ENCODE measurements at regions of chrX and their contacts with region 1.

Region 1: DNA sequence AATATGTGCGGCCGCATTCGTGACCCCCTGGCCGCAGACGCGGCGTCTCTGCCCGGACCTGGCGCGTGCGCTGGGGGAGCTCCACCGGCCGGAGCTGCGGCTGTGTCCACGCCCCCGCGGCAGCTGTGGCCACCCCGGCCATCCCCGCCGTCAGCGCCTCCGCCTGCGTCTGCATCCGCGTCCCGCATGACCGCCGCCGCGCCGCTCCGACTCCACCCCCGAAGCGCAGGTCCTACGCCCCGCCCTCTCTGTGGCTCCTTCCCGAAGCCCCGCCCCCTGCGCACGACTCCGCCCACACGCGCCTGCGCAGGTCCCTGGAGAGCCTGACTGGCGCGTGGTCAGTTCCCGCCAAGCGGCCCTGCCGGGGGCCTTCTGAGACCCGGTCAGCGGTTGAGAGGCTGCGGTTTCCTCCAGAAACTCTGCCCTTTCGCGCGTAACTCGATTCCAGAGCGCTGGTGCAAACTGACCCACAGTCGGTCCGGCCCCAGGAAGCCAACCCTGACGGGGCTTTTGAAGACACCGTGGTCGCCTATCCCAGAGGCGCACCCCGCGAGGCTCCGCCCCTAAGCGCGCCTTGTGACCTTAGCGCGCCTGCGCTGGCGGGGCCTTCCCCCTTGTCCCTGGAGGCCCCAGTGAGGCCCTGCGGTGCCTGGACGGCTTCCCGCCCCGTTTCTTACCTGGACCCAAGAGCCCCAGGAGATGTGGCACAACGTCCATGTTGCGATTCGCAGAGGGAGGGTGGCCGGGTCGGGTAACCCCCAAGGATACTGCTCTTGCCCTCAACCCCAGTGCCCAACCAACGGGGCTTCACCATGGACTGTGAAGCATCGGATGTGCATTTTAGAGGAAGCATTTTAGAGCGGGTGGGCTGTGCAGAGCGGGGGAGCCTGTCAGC is at the start of gene LAGE3:
- DNase-seq: peak; percentile 95
- ATAC-seq: peak; percentile 90
- H3K4me3 Mint-ChIP-seq: peak within 1 kb of the TSS; percentile 80
- H3K27ac Mint-ChIP-seq: peak within 1 kb of the TSS; percentile 88
- H3K4me1 Mint-ChIP-seq: peaks cover 23% of the 10 kb centered on the region
- H3K27me3 Mint-ChIP-seq: no peaks in the 10 kb centered on the region
- CTCF ChIP-seq: no peak
- total RNA-seq, gene LAGE3: 16.6 and 18.9 TPM in 2 replicates

Region 2: DNA sequence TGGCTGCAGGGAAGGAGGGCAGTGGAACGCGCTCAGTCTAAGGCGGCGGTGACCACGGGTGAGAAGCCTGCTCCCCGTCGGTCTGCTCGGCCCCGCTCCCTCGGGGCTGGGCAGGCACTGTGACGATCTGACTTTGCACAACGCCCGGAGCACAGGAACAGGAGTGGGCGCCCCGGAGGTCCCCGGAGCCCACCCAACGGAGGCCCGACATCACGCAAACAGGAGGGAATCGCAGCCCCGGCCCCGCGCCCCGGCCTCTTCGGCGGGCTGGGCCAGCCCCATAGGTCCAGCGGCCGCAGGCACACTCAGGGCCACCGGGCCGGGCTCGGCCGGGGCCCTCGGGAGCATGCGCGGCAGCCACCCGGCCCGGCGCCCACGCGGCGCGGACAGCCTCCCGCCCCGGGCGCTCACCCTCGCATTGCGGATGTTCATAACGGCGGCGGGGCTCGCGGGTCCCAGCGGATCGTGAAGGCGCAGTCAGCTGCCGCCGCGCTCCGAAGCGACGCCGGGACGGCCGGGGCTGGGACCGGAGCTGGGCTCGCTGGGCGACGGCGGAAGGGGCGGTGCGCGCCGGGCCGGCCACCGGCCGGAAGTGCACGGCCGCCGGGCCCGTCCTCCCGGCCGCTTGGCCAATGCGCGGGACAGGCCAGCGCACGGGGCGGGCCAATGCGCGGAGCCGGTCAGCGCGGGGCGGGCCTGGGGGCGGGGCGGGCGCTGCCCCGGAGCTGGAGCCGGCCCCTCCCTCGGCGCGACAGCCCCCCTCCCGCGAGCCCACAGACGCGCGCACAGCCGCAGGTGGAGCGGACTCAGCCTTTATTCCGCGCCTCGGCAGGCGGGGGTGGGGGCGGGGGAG is 544.3 kb before region 1 on chrX and contains the start of gene NAA10:
- CTCF ChIA-PET with region 1: no interaction called
- POLR2A ChIA-PET with region 1: no interaction called
- intact Hi-C with region 1: no loop called
- DNase-seq: peak; percentile 62
- ATAC-seq: peak; percentile 93
- H3K4me3 Mint-ChIP-seq: peak within 1 kb of the TSS; percentile 84
- H3K27ac Mint-ChIP-seq: peak within 1 kb of the TSS; percentile 46
- H3K4me1 Mint-ChIP-seq: peaks cover 24% of the 10 kb centered on the region
- H3K27me3 Mint-ChIP-seq: no peaks in the 10 kb centered on the region
- CTCF ChIP-seq: no peak
- total RNA-seq, gene NAA10: 94.8 and 109 TPM in 2 replicates

Region 3: DNA sequence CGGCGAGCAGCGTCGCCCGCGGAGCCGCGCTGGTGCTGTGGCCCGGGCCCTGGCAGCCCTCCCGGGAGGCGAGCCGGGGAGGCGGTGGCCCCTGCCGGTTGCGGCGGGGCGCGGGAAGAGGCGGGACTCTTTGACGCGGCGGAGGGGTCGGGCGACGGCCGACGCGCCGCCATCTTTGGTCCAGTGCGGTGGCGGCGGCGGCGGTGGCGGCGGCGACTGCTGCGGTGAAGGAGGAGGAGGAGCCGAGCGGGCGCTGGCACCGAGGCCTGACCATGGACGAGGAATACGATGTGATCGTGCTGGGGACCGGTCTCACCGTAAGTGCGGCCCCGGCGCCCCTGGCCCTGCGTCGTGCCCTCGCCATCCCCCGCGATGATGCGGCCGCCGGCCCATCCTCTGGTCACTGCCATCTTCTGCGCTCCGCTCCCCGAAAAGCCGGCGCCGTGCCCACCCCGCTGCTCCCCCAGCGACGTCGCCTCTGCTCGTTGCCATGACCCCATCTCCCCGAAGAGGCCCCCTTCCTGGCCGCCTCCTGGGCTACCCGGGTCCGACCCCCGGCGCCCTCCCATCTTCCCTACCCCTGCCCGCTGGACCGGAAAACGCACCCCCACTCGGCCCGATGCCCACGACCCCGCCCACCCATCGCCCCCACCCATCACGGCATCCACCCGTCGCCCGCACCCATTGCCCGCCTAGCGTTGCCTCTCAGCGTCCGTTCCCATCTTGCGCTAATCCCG is 41.8 kb before region 1 on chrX and contains the start of gene GDI1:
- CTCF ChIA-PET with region 1: no interaction called
- POLR2A ChIA-PET with region 1: interaction called, 4 read pairs
- intact Hi-C with region 1: loop called (anchors 2 kb)
- DNase-seq: peak; percentile 62
- ATAC-seq: peak; percentile 69
- H3K4me3 Mint-ChIP-seq: peak within 1 kb of the TSS; percentile 88
- H3K27ac Mint-ChIP-seq: peak within 1 kb of the TSS; percentile 86
- H3K4me1 Mint-ChIP-seq: peaks cover 22% of the 10 kb centered on the region
- H3K27me3 Mint-ChIP-seq: no peaks in the 10 kb centered on the region
- CTCF ChIP-seq: no peak
- total RNA-seq, gene GDI1: 112 and 127 TPM in 2 replicates

Region 4: GRCh38 chrX:154526901-154527675 is 48.1 kb after region 1 on chrX:
- CTCF ChIA-PET with region 1: no interaction called
- POLR2A ChIA-PET with region 1: interaction called, 4 read pairs
- intact Hi-C with region 1: loop called (anchors 1 kb)
- DNase-seq: peak; percentile 44
- ATAC-seq: peak; percentile 90
- H3K4me3 Mint-ChIP-seq: peak overlapping the region; percentile 68
- H3K27ac Mint-ChIP-seq: peak overlapping the region; percentile 76
- H3K4me1 Mint-ChIP-seq: peaks cover 14% of the 10 kb centered on the region
- H3K27me3 Mint-ChIP-seq: no peaks in the 10 kb centered on the region
- CTCF ChIP-seq: no peak

Region 5: GRCh38 chrX:154990496-154990895 is 511.5 kb after region 1 on chrX:
- CTCF ChIA-PET with region 1: no interaction called
- POLR2A ChIA-PET with region 1: no interaction called
- intact Hi-C with region 1: no loop called
- DNase-seq: no peak
- ATAC-seq: no peak
- H3K4me3 Mint-ChIP-seq: no peak overlapping the region
- H3K27ac Mint-ChIP-seq: no peak overlapping the region
- H3K4me1 Mint-ChIP-seq: no peaks in the 10 kb centered on the region
- H3K27me3 Mint-ChIP-seq: no peaks in the 10 kb centered on the region
- CTCF ChIP-seq: no peak